Activated naive CD4-positive, alpha-beta T cell treated with anti-CD3 and anti-CD28 coated beads for 36 hours (primary cell): ENCODE measurements at regions of chr9 and their contacts with region 1.

Region 1: DNA sequence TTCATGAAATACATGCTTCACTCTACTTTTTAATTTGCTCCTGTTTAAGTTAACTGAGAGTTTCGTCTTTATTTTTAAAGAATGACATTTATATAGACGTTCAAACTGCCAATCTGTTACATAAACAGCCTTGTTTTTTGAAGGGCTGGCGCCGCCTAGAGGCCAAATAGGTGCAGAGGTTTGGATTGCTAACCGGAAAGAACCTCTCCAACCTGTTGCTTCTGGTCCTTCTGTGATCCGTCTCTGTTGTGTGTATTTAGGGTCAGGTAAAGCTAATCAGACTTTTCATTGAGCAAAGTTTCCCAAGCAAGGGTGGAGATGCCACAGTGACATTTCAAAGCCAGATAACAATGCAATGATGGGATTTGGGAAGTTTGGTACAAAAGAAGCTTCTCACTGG is 39.5 kb upstream of the GLIS3 start:
- DNase-seq: peak; percentile 96
- H3K4me3 Mint-ChIP-seq: peak overlapping the region; percentile 51
- H3K27ac Mint-ChIP-seq: peak overlapping the region; percentile 69
- H3K4me1 Mint-ChIP-seq: peaks cover 10% of the 10 kb centered on the region
- H3K27me3 Mint-ChIP-seq: no peaks in the 10 kb centered on the region

Region 2: DNA sequence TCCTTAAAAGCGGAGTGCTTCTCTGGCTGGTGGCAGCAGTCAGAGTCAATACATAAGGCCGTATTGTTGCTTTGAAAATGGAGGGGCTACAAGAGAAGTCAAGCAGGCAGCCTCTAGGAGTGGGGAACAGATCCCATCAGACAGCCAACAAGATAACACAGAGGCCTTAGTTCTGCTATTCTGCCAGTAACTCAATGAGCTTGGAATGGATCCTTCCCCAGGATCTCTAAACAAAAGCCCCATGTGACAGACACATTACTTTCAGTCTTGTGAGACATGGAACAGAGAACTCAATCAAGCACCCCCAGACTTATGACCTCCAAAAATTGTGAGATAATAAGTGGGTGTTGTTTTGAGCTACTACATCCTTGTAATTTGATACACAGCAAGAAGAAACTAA is 972.2 kb before region 1 on chr9:
- CTCF ChIA-PET with region 1: no interaction called
- intact Hi-C with region 1: no loop called
- DNase-seq: no peak
- H3K4me3 Mint-ChIP-seq: no peak overlapping the region
- H3K27ac Mint-ChIP-seq: no peak overlapping the region
- H3K4me1 Mint-ChIP-seq: peaks cover 20% of the 10 kb centered on the region
- H3K27me3 Mint-ChIP-seq: no peaks in the 10 kb centered on the region

Region 3: GRCh38 chr9:3467593-3468219 is 871.7 kb before region 1 on chr9:
- CTCF ChIA-PET with region 1: no interaction called
- intact Hi-C with region 1: loop called (anchors 2 kb)
- DNase-seq: peak; percentile 75
- H3K4me3 Mint-ChIP-seq: no peak overlapping the region
- H3K27ac Mint-ChIP-seq: no peak overlapping the region
- H3K4me1 Mint-ChIP-seq: peaks cover 12% of the 10 kb centered on the region
- H3K27me3 Mint-ChIP-seq: no peaks in the 10 kb centered on the region

Region 4: GRCh38 chr9:4077499-4078102 is 261.8 kb before region 1 on chr9:
- CTCF ChIA-PET with region 1: interaction called, 5 read pairs
- intact Hi-C with region 1: loop called (anchors 5 kb)
- DNase-seq: peak; percentile 76
- H3K4me3 Mint-ChIP-seq: no peak overlapping the region
- H3K27ac Mint-ChIP-seq: no peak overlapping the region
- H3K4me1 Mint-ChIP-seq: no peaks in the 10 kb centered on the region
- H3K27me3 Mint-ChIP-seq: peaks cover 3% of the 10 kb centered on the region

Region 5: DNA sequence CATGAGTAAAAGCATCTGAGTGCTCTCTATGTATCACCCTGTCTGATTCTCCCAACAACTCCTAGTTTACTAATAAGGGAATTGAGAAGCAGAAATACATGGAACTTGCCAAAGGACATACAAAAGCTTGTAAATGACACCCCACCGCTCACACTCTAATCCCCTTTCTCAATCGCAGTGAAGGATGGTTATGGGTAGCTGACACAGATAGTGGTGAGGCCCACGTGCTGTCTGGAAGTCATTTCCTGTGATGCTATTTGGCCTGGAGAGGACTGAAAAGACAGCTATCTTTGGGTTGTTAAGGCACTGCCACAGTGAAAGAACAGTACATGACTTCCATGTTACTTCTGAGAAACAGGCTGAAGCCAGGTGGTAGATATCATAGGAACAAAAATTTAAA is 156.5 kb before region 1 on chr9:
- CTCF ChIA-PET with region 1: no interaction called
- intact Hi-C with region 1: no loop called
- DNase-seq: no peak
- H3K4me3 Mint-ChIP-seq: no peak overlapping the region
- H3K27ac Mint-ChIP-seq: no peak overlapping the region
- H3K4me1 Mint-ChIP-seq: no peaks in the 10 kb centered on the region
- H3K27me3 Mint-ChIP-seq: no peaks in the 10 kb centered on the region

Region 6: GRCh38 chr9:4269856-4270255 is 69.5 kb before region 1 on chr9:
- CTCF ChIA-PET with region 1: no interaction called
- intact Hi-C with region 1: loop called (anchors 2 kb)
- DNase-seq: no peak
- H3K4me3 Mint-ChIP-seq: no peak overlapping the region
- H3K27ac Mint-ChIP-seq: no peak overlapping the region
- H3K4me1 Mint-ChIP-seq: no peaks in the 10 kb centered on the region
- H3K27me3 Mint-ChIP-seq: no peaks in the 10 kb centered on the region

Region 7: GRCh38 chr9:4315582-4316215 is 23.7 kb before region 1 on chr9:
- CTCF ChIA-PET with region 1: interaction called, 117 read pairs
- intact Hi-C with region 1: loop called (anchors 1 kb)
- DNase-seq: peak; percentile 89
- H3K4me3 Mint-ChIP-seq: no peak overlapping the region
- H3K27ac Mint-ChIP-seq: no peak overlapping the region
- H3K4me1 Mint-ChIP-seq: peaks cover 2% of the 10 kb centered on the region
- H3K27me3 Mint-ChIP-seq: no peaks in the 10 kb centered on the region

Region 8: GRCh38 chr9:4327504-4328191 is 11.7 kb before region 1 on chr9:
- CTCF ChIA-PET with region 1: interaction called, 17 read pairs
- intact Hi-C with region 1: no loop called
- DNase-seq: no peak
- H3K4me3 Mint-ChIP-seq: no peak overlapping the region
- H3K27ac Mint-ChIP-seq: no peak overlapping the region
- H3K4me1 Mint-ChIP-seq: peaks cover 22% of the 10 kb centered on the region
- H3K27me3 Mint-ChIP-seq: no peaks in the 10 kb centered on the region

Region 9: GRCh38 chr9:4814913-4815312 is 475.6 kb after region 1 on chr9:
- CTCF ChIA-PET with region 1: no interaction called
- intact Hi-C with region 1: no loop called
- DNase-seq: no peak
- H3K4me3 Mint-ChIP-seq: peak overlapping the region; percentile 9
- H3K27ac Mint-ChIP-seq: peak overlapping the region; percentile 87
- H3K4me1 Mint-ChIP-seq: peaks cover 60% of the 10 kb centered on the region
- H3K27me3 Mint-ChIP-seq: no peaks in the 10 kb centered on the region

Region 10: GRCh38 chr9:5364294-5365024 is 1025.1 kb after region 1 on chr9:
- CTCF ChIA-PET with region 1: no interaction called
- intact Hi-C with region 1: no loop called
- DNase-seq: peak; percentile 22
- H3K4me3 Mint-ChIP-seq: no peak overlapping the region
- H3K27ac Mint-ChIP-seq: peak overlapping the region; percentile 35
- H3K4me1 Mint-ChIP-seq: peaks cover 25% of the 10 kb centered on the region
- H3K27me3 Mint-ChIP-seq: no peaks in the 10 kb centered on the region